ENCODE measurements at regions of chr16 and their contacts with region 1.

Region 1: DNA sequence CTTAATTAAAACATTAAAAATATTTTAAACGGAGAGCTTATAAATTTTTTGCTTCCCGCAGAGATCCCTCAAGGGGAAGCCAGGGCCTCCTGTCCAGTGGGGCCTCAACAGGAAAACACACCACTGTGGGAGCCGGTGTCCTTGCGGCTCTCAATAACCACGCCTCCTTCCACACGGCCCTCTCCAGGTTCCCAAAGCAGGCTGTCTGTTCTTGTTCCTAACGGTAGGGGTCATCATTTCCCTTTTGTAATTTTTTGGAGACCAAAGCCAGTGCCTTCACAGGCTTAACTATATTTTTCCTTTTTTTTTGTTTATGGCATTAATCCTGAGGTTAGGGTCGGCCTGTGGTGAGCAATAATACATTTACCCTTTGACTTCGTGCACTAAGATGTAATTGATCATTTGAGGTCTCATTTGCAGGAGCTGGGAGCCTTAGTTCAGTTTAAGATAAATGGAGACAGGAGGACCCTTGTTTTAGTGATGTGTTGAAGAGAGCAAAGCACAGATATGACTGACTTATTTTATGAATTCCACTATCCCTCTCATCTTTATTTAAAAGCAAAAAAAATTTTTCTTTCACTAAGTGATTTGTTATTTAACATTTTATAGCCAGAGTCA is 77.5 kb upstream of the N4BP1 start:
- DNase-seq: peak; percentile 51
- H3K4me3 Mint-ChIP-seq: no peak overlapping the region
- H3K27ac Mint-ChIP-seq: no peak overlapping the region
- H3K4me1 Mint-ChIP-seq: no peaks in the 10 kb centered on the region
- H3K27me3 Mint-ChIP-seq: peaks cover 12% of the 10 kb centered on the region

Region 2: GRCh38 chr16:48565752-48566151 is 121.8 kb before region 1 on chr16:
- CTCF ChIA-PET with region 1: no interaction called
- POLR2A ChIA-PET with region 1: no interaction called
- intact Hi-C with region 1: no loop called
- DNase-seq: no peak
- H3K4me3 Mint-ChIP-seq: no peak overlapping the region
- H3K27ac Mint-ChIP-seq: no peak overlapping the region
- H3K4me1 Mint-ChIP-seq: peaks cover 60% of the 10 kb centered on the region
- H3K27me3 Mint-ChIP-seq: no peaks in the 10 kb centered on the region

Region 3: GRCh38 chr16:48704710-48705109 is 17.2 kb after region 1 on chr16:
- CTCF ChIA-PET with region 1: no interaction called
- POLR2A ChIA-PET with region 1: no interaction called
- intact Hi-C with region 1: no loop called
- DNase-seq: no peak
- H3K4me3 Mint-ChIP-seq: no peak overlapping the region
- H3K27ac Mint-ChIP-seq: no peak overlapping the region
- H3K4me1 Mint-ChIP-seq: no peaks in the 10 kb centered on the region
- H3K27me3 Mint-ChIP-seq: no peaks in the 10 kb centered on the region

Region 4: GRCh38 chr16:49350265-49351095 is 663.0 kb after region 1 on chr16:
- CTCF ChIA-PET with region 1: interaction called, 7 read pairs
- POLR2A ChIA-PET with region 1: no interaction called
- intact Hi-C with region 1: loop called (anchors 1 kb)
- DNase-seq: peak; percentile 59
- H3K4me3 Mint-ChIP-seq: no peak overlapping the region
- H3K27ac Mint-ChIP-seq: no peak overlapping the region
- H3K4me1 Mint-ChIP-seq: no peaks in the 10 kb centered on the region
- H3K27me3 Mint-ChIP-seq: peaks cover 19% of the 10 kb centered on the region

Measured in activated CD4-positive, alpha-beta memory T cell treated with anti-CD3 and anti-CD28 coated beads for 36 hours (primary cell).